ENCODE measurements at regions of chr12 and their contacts with region 1.

Region 1: DNA sequence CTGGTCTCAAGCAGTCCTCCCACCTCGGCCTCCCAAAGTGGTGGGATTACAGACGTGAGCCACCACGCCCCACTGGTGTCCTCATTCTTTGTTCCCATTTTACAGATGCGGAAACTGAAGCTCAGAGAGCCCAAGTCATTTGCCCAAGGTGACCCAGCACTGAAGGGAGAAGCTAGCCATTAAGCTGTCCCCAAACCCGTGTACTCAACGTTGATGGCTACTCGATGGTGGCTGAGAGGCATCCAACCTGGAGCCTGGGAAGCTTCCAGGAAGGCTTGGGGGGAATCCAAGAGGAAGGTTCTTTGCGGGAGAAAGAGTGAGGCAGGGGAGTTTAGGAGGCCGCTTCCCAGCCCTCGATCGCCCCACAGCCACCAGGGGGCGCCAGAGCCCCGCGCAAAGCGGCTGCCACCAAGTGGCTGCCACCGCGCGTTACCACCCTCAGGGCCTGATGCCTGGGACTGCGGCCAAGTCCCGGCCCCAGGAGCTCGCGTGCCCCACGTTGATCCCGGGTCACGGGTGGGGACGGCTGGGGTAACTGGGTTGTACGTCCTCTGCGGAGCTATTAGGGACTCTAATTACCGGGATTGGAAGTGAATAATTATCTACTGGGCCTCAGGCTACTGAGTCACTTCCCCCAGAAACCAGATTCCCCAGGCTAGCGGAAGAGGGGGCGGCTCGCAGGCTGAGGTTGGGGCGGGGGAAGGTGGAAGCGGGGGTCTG is 8.8 kb upstream of the SH2B3 start:
- DNase-seq: peak; percentile 89
- ATAC-seq: peak; percentile 94
- H3K4me3 Mint-ChIP-seq: peak overlapping the region; percentile 68
- H3K27ac Mint-ChIP-seq: peak overlapping the region; percentile 81
- H3K4me1 Mint-ChIP-seq: peaks cover 32% of the 10 kb centered on the region
- H3K27me3 Mint-ChIP-seq: no peaks in the 10 kb centered on the region

Region 2: GRCh38 chr12:111368788-111369495 is 27.9 kb before region 1 on chr12 and contains the start of gene PHETA1:
- CTCF ChIA-PET with region 1: interaction called, 15 read pairs
- POLR2A ChIA-PET with region 1: no interaction called
- DNase-seq: peak; percentile 85
- ATAC-seq: peak; percentile 95
- H3K4me3 Mint-ChIP-seq: peak within 1 kb of the TSS; percentile 73
- H3K27ac Mint-ChIP-seq: no peak within 1 kb of the TSS
- H3K4me1 Mint-ChIP-seq: peaks cover 12% of the 10 kb centered on the region
- H3K27me3 Mint-ChIP-seq: peaks cover 10% of the 10 kb centered on the region
- total RNA-seq, gene PHETA1: 1.1 to 1.7 TPM

Region 3: DNA sequence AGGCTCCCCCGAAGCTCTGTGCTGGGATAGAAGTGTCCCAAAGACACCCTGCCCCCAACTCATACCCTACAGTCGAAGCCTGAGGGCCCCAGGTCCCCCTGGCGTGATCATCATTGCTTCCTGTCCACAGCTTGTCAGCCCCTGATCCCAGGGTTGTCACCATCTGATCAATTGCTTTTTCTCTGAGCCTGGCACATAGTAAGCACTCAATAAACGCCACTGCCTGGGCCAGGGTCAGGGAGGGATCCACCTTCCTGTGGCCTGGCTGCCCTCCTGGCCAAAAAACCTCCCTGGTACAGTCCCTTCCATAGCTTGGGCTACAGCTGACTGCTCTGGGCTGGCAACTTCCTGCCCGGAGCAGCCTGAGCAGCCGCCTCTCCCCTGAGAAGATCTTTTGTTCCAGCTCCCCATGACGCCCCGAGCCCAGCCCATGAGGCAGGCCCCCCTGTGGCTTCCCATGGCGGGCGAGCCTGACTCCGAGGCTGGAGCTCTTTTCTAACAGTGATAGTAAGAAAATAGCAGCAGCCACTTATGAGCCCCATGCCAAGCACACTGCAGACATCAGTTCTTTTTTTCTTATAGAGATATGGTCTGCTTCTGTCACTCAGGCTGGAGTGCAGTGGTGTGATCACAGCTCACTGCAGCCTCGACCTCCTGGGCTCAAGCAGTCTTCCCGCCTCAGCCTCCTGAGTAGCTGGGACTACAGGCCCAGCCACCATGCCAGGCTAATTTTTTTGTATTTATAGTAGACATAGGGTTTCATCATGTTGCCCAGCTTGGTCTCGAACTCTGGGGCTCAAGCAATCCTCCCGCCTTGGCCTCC is 15.3 kb after region 1 on chr12:
- CTCF ChIA-PET with region 1: interaction called, 26 read pairs
- POLR2A ChIA-PET with region 1: interaction called, 4 read pairs
- DNase-seq: no peak
- ATAC-seq: peak; percentile 59
- H3K4me3 Mint-ChIP-seq: peak overlapping the region; percentile 12
- H3K27ac Mint-ChIP-seq: peak overlapping the region; percentile 91
- H3K4me1 Mint-ChIP-seq: peaks cover 82% of the 10 kb centered on the region
- H3K27me3 Mint-ChIP-seq: no peaks in the 10 kb centered on the region

Region 4: GRCh38 chr12:111462210-111462769 is 65.4 kb after region 1 on chr12:
- CTCF ChIA-PET with region 1: interaction called, 1,088 read pairs
- POLR2A ChIA-PET with region 1: interaction called, 3 read pairs
- DNase-seq: no peak
- ATAC-seq: no peak
- H3K4me3 Mint-ChIP-seq: no peak overlapping the region
- H3K27ac Mint-ChIP-seq: no peak overlapping the region
- H3K4me1 Mint-ChIP-seq: no peaks in the 10 kb centered on the region
- H3K27me3 Mint-ChIP-seq: no peaks in the 10 kb centered on the region

Region 5: DNA sequence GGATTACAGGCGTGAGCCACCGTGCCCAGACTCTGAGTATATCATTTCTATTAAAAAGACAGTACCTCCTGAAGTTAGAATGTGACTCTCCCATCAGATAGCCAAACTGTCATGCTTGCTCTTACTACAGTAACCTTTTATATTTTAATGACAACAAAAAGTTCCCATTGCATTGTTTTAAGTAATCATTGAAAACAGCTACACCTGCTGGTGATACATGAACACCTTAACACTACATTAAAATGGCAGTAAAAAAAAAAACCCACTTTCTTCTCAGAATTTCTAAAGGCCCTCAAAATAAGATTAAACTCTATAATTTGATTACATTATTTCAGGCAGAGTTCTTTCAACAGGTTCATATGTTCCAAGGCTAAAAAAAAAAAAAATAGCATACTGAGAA is 85.6 kb after region 1 on chr12:
- CTCF ChIA-PET with region 1: interaction called, 41 read pairs
- POLR2A ChIA-PET with region 1: no interaction called
- DNase-seq: no peak
- ATAC-seq: no peak
- H3K4me3 Mint-ChIP-seq: no peak overlapping the region
- H3K27ac Mint-ChIP-seq: no peak overlapping the region
- H3K4me1 Mint-ChIP-seq: peaks cover 4% of the 10 kb centered on the region
- H3K27me3 Mint-ChIP-seq: no peaks in the 10 kb centered on the region

Region 6: GRCh38 chr12:111529424-111530368 is 132.8 kb after region 1 on chr12:
- CTCF ChIA-PET with region 1: interaction called, 109 read pairs
- POLR2A ChIA-PET with region 1: no interaction called
- DNase-seq: peak; percentile 73
- ATAC-seq: peak; percentile 89
- H3K4me3 Mint-ChIP-seq: no peak overlapping the region
- H3K27ac Mint-ChIP-seq: no peak overlapping the region
- H3K4me1 Mint-ChIP-seq: peaks cover 3% of the 10 kb centered on the region
- H3K27me3 Mint-ChIP-seq: no peaks in the 10 kb centered on the region

Region 7: DNA sequence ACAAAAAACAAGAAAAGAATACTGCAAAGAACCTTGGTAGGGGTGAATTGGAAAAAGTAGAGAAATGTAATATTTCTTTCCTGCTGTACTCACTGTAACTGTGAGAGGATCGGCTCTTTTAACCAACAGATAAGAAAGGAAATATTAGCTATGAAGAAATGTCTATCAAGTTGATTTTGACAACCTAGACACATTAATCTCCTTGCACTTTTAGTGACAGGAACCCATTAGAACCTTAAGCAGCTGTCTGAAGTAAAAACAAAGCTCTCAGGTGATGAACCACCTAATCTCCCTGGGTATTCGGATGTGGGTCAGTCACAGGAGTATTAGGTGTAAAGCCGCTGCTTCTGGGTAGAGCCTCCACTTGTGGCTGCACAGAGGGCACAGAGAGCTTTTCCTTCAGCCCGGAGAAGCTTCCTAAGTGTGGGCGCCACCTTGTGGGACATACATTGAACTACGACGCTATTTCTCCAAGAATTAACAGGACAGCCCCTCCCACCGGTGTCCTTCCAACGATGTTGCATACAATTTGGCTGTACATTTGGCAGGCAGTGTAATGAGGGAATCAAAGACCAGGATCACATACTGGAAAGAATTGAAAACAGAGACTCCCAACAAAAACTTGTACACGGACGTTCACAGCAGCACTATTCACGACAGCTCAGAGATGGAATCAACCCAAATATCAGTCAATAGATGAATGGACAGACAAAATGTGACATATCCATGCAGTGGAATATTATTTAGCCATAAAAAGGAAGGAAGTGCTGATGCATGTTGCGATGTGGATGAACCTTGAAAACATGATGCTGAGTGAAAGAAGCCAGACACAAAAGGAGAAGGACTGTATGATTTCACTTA is 416.2 kb after region 1 on chr12:
- CTCF ChIA-PET with region 1: interaction called, 17 read pairs
- POLR2A ChIA-PET with region 1: no interaction called
- DNase-seq: peak; percentile 82
- ATAC-seq: peak; percentile 96
- H3K4me3 Mint-ChIP-seq: no peak overlapping the region
- H3K27ac Mint-ChIP-seq: no peak overlapping the region
- H3K4me1 Mint-ChIP-seq: peaks cover 10% of the 10 kb centered on the region
- H3K27me3 Mint-ChIP-seq: peaks cover 9% of the 10 kb centered on the region